ENCODE measurements at regions of chr18 and their contacts with region 1.

Region 1: GRCh38 chr18:59837586-59837985 is 62.2 kb upstream of the PMAIP1 start:
- DNase-seq: no peak
- ATAC-seq: peak; percentile 69
- H3K4me3 Mint-ChIP-seq: no peak overlapping the region
- H3K27ac Mint-ChIP-seq: no peak overlapping the region
- H3K4me1 Mint-ChIP-seq: peaks cover 27% of the 10 kb centered on the region
- H3K27me3 Mint-ChIP-seq: no peaks in the 10 kb centered on the region
- CTCF ChIP-seq: peak; percentile 47

Region 2: GRCh38 chr18:59783138-59783537 is 54.4 kb before region 1 on chr18:
- CTCF ChIA-PET with region 1: no interaction called
- POLR2A ChIA-PET with region 1: no interaction called
- intact Hi-C with region 1: no loop called
- DNase-seq: no peak
- ATAC-seq: no peak
- H3K4me3 Mint-ChIP-seq: no peak overlapping the region
- H3K27ac Mint-ChIP-seq: no peak overlapping the region
- H3K4me1 Mint-ChIP-seq: no peaks in the 10 kb centered on the region
- H3K27me3 Mint-ChIP-seq: peaks cover 5% of the 10 kb centered on the region
- CTCF ChIP-seq: no peak

Region 3: DNA sequence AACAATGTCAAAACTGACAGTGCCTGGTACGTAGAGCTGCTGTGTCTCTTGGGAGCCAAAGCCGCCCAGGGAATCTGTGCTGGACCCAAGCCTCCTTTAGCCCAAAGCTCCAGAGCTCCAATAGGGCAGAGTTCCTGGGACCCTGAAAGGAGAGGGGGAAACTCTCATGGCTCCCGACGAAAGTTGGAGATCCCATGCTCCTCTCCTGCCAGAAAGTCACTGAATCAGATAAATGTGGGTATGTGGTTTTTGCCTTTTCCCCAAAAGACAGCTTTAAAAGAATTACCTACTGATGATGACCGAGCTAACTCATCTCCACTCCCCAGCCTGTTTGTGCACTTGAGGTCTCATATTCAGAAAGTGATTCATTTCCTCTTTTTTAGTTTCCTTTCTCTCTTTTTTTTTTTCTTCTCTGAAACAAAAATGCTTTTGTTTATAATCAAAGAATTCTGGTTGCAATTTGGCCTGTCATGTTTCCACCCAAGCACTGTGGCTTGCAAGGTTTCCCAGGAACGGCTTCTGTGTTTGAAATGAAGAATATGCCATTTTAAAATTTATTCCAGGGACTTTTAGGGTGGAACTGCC is 48.1 kb after region 1 on chr18:
- CTCF ChIA-PET with region 1: interaction called, 3 read pairs
- POLR2A ChIA-PET with region 1: no interaction called
- intact Hi-C with region 1: loop called (anchors 1 kb)
- DNase-seq: peak; percentile 38
- ATAC-seq: peak; percentile 79
- H3K4me3 Mint-ChIP-seq: peak overlapping the region; percentile 70
- H3K27ac Mint-ChIP-seq: peak overlapping the region; percentile 82
- H3K4me1 Mint-ChIP-seq: peaks cover 53% of the 10 kb centered on the region
- H3K27me3 Mint-ChIP-seq: no peaks in the 10 kb centered on the region
- CTCF ChIP-seq: no peak

Region 4: DNA sequence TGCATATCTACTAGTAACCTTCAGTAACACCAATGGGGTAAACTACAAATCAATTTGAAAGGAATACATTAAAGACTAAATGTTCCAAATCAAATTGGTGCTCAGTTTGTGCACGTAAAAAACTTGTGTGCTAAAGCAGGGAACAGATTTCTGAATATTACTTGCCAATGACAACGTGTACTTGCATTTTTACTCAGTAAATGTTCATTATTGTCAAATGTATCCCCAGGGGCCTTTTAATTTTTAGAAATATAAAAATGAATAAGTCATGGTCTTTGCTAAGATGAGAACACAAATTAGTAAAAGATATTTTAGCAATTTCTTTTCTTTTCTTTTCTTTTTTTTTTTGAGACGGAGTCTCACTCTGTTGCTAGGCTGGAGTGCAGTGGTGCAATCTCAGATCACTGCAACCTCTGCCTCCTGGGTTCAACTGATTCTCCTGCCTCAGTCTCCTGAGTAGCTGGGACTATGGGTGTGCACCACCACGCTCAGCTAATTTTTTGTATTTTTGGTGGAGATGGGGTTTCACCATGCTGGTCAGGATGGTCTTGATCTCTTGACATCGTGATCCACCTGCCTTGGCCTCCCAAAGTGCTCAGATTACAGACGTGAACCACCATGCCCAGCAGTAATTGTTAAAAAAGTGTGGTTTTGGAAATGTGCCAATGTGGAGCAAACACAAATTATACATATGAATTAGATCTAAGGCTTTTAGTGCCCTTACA is 114.9 kb after region 1 on chr18:
- CTCF ChIA-PET with region 1: interaction called, 3 read pairs
- POLR2A ChIA-PET with region 1: interaction called, 9 read pairs
- intact Hi-C with region 1: loop called (anchors 1 kb)
- DNase-seq: no peak
- ATAC-seq: no peak
- H3K4me3 Mint-ChIP-seq: no peak overlapping the region
- H3K27ac Mint-ChIP-seq: peak overlapping the region; percentile 50
- H3K4me1 Mint-ChIP-seq: peaks cover 26% of the 10 kb centered on the region
- H3K27me3 Mint-ChIP-seq: no peaks in the 10 kb centered on the region
- CTCF ChIP-seq: no peak

Region 5: GRCh38 chr18:59988098-59988706 is 150.6 kb after region 1 on chr18:
- CTCF ChIA-PET with region 1: interaction called, 22 read pairs
- POLR2A ChIA-PET with region 1: no interaction called
- intact Hi-C with region 1: loop called (anchors 1 kb)
- DNase-seq: no peak
- ATAC-seq: peak; percentile 64
- H3K4me3 Mint-ChIP-seq: no peak overlapping the region
- H3K27ac Mint-ChIP-seq: no peak overlapping the region
- H3K4me1 Mint-ChIP-seq: no peaks in the 10 kb centered on the region
- H3K27me3 Mint-ChIP-seq: peaks cover 17% of the 10 kb centered on the region
- CTCF ChIP-seq: peak; percentile 100

Region 6: DNA sequence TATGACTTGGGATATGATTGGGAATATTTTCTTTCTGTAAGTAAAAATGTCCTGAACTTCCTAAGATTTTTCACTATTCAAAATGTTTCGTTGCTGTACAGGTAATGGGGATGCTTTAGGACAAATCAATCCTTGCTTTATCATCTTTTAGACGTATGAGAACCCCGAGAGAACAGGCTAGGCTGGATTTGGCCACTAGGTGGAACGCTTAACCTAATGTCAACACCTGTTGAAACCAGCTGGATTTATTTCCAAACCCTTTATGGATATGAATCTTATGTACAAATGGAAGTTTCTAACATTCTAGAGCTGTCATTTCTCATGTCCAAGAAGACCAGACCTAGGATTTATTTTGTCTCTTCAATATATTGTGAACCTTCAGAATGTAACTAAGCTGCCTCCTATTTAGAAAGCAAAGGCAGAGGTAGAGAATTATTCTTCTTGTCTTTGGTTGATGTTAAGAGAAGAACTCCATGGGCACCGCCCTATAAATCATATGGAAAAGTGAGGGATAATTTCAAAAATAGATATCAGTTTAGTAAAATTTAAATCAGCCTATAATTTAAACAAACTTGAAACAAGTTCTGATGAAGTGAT is 158.9 kb after region 1 on chr18:
- CTCF ChIA-PET with region 1: interaction called, 26 read pairs
- POLR2A ChIA-PET with region 1: no interaction called
- intact Hi-C with region 1: loop called (anchors 1 kb)
- DNase-seq: no peak
- ATAC-seq: no peak
- H3K4me3 Mint-ChIP-seq: no peak overlapping the region
- H3K27ac Mint-ChIP-seq: no peak overlapping the region
- H3K4me1 Mint-ChIP-seq: no peaks in the 10 kb centered on the region
- H3K27me3 Mint-ChIP-seq: peaks cover 20% of the 10 kb centered on the region
- CTCF ChIP-seq: no peak

Region 7: GRCh38 chr18:60277855-60278480 is 440.4 kb after region 1 on chr18:
- CTCF ChIA-PET with region 1: no interaction called
- POLR2A ChIA-PET with region 1: no interaction called
- intact Hi-C with region 1: loop called (anchors 10 kb)
- DNase-seq: no peak
- ATAC-seq: no peak
- H3K4me3 Mint-ChIP-seq: no peak overlapping the region
- H3K27ac Mint-ChIP-seq: no peak overlapping the region
- H3K4me1 Mint-ChIP-seq: no peaks in the 10 kb centered on the region
- H3K27me3 Mint-ChIP-seq: no peaks in the 10 kb centered on the region
- CTCF ChIP-seq: no peak